CD14-positive monocyte (primary cell): ENCODE measurements at regions of chr16 and their contacts with region 1.

Region 1: GRCh38 chr16:88662843-88663606 is at the start of gene MVD:
- DNase-seq: peak; percentile 97 to 98 (median 98)
- H3K4me3 ChIP-seq: peak within 1 kb of the TSS; percentile 69 to 87 (median 81)
- H3K4me3 Mint-ChIP-seq: peak within 1 kb of the TSS; percentile 83 to 91
- H3K27ac ChIP-seq: peak within 1 kb of the TSS; percentile 20 to 93
- H3K27ac Mint-ChIP-seq: peak within 1 kb of the TSS; percentile 83 to 98 (median 92)
- H3K4me1 ChIP-seq: peaks cover 20 to 21% of the 10 kb centered on the region in 2 donors
- H3K4me1 Mint-ChIP-seq: peaks cover 19% of the 10 kb centered on the region
- H3K27me3 ChIP-seq: no peaks in the 10 kb centered on the region
- H3K27me3 Mint-ChIP-seq: peaks cover 0 to 3% (median 3%) of the 10 kb centered on the region in 3 donors
- CTCF ChIP-seq: no peak
- polyA plus RNA-seq, gene MVD: 9.0 to 17.9 (median 12.2) TPM

Region 2: DNA sequence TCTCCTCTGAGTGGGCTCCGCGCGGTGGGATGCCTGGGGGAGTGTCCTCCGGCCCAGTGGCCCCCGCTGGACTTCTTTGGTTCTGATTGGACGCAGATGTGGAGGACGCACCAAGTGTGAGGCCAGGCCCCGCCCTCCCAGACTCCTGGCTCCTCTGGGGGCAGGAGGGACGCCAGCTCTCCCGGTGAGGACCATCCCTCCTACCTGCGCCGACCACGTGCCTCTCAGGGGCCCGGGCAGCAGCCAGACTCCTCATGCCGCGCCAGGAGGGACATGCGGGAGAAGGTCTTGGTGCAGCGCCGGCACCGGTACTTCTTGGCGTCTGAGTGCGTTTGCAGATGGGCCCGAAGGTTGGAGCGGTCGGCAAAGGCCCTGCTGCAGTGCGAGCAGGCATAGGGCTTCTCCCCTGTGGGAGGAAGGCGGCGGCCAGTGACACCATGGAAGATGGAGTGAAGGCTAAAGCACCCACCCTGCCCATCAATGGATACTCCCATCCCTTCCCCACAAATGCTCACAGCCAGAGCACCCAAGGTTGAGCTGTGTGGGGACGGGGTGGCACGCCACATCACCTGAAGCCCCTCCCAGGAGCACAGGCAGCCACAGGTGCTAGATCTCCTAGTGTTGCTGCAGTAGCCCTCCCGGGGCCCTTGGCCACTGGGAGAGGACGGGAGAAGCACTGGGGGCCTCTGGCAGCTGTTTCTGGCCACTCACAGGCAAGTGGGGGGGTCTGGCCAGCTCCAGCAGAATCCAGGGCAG is 15.4 kb after region 1 on chr16:
- intact Hi-C with region 1: loop called in 1 of 2 experiments (anchors 2 kb)
- DNase-seq: no peak
- H3K4me3 ChIP-seq: no peak overlapping the region
- H3K4me3 Mint-ChIP-seq: no peak overlapping the region
- H3K27ac ChIP-seq: no peak overlapping the region
- H3K27ac Mint-ChIP-seq: no peak overlapping the region
- H3K4me1 ChIP-seq: peaks cover 34 to 38% of the 10 kb centered on the region in 2 donors
- H3K4me1 Mint-ChIP-seq: peaks cover 31% of the 10 kb centered on the region
- H3K27me3 ChIP-seq: no peaks in the 10 kb centered on the region
- H3K27me3 Mint-ChIP-seq: no peaks in the 10 kb centered on the region
- CTCF ChIP-seq: no peak

Region 3: DNA sequence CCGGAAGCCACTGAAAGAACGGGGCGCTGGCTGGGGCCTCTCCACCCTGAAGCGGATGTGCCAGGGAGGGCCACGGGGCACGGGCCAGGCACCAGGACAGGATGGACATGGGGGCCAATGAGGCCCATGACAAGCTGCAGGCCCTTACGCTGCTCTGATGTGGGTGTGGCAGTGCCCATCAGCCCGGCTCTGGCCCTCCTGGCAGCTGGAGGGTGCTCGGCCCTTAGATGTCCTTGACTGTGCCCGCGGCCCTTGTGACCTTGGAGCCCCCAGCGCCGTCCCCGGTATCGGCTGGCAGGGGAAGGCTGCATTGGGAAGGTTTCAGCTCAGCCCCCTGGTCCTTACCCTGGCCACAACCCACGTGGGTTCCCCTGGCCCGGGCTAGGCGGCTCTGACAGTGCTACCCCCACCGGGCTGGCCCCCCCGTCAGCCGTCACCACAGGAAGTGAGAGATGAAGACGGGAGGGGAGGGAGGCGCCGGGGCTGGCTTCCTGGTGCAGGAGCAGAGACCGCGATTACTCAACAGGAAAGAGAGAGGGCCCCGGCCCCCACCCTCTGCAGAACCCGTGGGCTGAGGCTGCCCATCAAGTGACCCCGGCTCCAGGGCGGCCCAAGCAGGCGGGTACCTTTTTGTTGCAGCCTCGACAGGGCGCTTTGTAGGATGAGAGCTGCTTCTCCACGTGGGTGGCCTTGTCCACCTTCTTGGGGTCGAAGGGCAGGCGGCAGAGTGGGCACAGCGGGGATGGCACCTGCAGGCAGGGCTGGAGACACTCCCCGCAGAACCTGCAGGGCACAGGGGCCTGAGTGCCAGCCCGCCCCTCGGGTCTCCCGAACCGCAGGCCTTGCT is 37.8 kb after region 1 on chr16:
- intact Hi-C with region 1: loop called (anchors 5 kb)
- DNase-seq: peak; percentile 97 to 98 (median 98)
- H3K4me3 ChIP-seq: peak overlapping the region; percentile 2 to 96 (median 93)
- H3K4me3 Mint-ChIP-seq: peak overlapping the region; percentile 65 to 99
- H3K27ac ChIP-seq: peak overlapping the region; percentile 84 to 88
- H3K27ac Mint-ChIP-seq: peak overlapping the region; percentile 91 to 99 (median 98)
- H3K4me1 ChIP-seq: peaks cover 62 to 67% of the 10 kb centered on the region in 2 donors
- H3K4me1 Mint-ChIP-seq: peaks cover 57% of the 10 kb centered on the region
- H3K27me3 ChIP-seq: no peaks in the 10 kb centered on the region
- H3K27me3 Mint-ChIP-seq: peaks cover 0 to 4% (median 2%) of the 10 kb centered on the region in 3 donors
- CTCF ChIP-seq: no peak